Heart left ventricle (tissue), 16 donors: ENCODE measurements at regions of chr13 and their contacts with region 1.

Region 1: DNA sequence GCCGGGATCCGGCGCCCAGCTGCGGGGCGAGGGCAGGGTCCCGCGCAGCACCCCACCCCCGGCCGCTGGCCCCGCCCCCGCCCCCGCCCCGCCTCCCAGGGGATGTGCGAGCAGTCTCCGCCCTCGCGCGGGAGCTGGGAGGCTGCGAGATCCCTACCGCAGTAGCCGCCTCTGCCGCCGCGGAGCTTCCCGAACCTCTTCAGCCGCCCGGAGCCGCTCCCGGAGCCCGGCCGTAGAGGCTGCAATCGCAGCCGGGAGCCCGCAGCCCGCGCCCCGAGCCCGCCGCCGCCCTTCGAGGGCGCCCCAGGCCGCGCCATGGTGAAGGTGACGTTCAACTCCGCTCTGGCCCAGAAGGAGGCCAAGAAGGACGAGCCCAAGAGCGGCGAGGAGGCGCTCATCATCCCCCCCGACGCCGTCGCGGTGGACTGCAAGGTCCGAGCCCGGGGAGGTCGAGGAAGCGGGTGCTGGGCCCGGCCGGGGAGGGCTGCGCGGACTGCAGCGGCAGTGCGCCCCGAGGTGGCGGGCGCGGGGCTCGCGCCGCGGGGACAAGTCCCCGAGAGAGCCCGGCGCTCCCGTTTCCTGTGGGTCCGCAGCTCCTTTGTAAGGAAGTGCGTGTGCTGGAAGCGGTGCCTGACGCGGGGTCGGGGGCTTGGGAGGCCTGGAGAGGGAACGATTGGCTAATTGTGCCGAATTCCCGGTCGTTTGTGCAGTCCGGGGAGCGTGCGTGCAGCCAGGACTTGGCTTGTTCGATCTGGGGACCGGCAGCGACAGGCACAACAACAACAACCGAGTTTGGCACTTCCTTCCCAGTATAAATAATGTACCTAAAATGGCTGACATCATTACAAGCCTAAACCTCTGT is at the start of gene ITM2B:
- DNase-seq: peak; percentile 84 to 91 (median 87)
- ATAC-seq: peak; percentile 68 to 95 (median 88)
- H3K4me3 ChIP-seq: peak within 1 kb of the TSS; percentile 84 to 100 (median 96)
- H3K27ac ChIP-seq: peak within 1 kb of the TSS; percentile 99 to 100 (median 100)
- H3K4me1 ChIP-seq: peaks cover 6 to 59% (median 39%) of the 10 kb centered on the region in 12 donors
- H3K27me3 ChIP-seq: no peaks in the 10 kb centered on the region
- CTCF ChIP-seq: peak in 11 of 12 donors; percentile 28 to 64 (median 48)
- POLR2A ChIP-seq: peak; percentile 67 to 94
- total RNA-seq, gene ITM2B: 402 to 772 (median 504) TPM

Region 2: DNA sequence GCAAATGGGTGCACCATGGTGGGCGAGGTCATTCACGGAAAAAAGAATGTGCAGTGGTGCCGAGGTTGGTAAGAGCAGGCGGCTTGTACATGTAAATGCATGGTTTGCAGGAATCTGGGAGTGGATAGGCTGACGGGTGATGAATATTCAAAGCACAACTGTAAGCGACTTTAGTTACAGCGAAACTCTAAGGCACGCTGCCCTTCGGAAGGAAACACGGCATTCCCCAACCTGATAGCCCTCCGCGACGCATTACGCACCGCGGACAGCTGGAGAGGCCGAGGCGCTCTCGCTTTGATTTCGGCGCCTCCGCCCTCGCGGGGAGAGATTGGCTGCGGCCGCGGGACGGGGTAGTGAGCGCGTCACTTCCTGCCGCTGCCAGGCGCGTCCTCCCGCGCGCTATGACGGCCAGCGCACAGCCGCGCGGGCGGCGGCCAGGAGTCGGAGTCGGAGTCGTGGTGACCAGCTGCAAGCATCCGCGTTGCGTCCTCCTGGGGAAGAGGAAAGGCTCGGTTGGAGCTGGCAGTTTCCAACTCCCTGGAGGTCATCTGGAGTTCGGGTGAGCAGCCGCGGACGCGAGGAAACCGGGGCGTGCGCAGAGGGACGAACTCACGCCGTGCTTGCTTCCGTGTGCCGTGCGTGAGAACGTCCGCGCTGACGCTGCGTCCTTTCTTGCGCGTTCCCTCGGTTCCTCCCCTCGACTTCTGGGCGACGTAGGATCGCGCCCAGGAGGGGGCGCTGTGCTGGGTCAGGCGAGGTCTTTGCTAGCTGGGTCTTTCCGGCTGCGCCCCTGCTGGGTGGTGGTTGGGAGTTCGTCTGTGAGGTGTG is 195.7 kb before region 1 on chr13 and contains the start of gene NUDT15:
- intact Hi-C with region 1: loop called in 2 of 10 experiments (anchors 2 to 5 kb)
- DNase-seq: peak; percentile 93 to 96 (median 94)
- ATAC-seq: peak; percentile 97 to 99 (median 99)
- H3K4me3 ChIP-seq: peak within 1 kb of the TSS; percentile 43 to 85 (median 71)
- H3K27ac ChIP-seq: peak within 1 kb of the TSS; percentile 78 to 99 (median 96)
- H3K4me1 ChIP-seq: peaks cover 2 to 22% (median 12%) of the 10 kb centered on the region in 12 donors
- H3K27me3 ChIP-seq: no peaks in the 10 kb centered on the region
- CTCF ChIP-seq: peak; percentile 91 to 100 (median 96)
- POLR2A ChIP-seq: peak; percentile 7 to 79
- total RNA-seq, gene NUDT15: 6.8 to 12.6 (median 10.4) TPM

Region 3: GRCh38 chr13:48094781-48095502 is 138.3 kb before region 1 on chr13 and contains the start of gene MED4:
- intact Hi-C with region 1: loop called in 7 of 10 experiments (anchors 5 to 10 kb)
- DNase-seq: peak; percentile 95 to 98 (median 96)
- ATAC-seq: peak; percentile 94 to 99 (median 98)
- H3K4me3 ChIP-seq: peak within 1 kb of the TSS; percentile 65 to 99 (median 90)
- H3K27ac ChIP-seq: peak within 1 kb of the TSS; percentile 78 to 95 (median 88)
- H3K4me1 ChIP-seq: peaks cover 0 to 47% (median 34%) of the 10 kb centered on the region in 12 donors
- H3K27me3 ChIP-seq: no peaks in the 10 kb centered on the region
- CTCF ChIP-seq: peak; percentile 98 to 100 (median 99)
- POLR2A ChIP-seq: peak in 1 of 2 donors; percentile 77
- total RNA-seq, gene MED4: 24.9 to 50.3 (median 46.0) TPM

Region 4: DNA sequence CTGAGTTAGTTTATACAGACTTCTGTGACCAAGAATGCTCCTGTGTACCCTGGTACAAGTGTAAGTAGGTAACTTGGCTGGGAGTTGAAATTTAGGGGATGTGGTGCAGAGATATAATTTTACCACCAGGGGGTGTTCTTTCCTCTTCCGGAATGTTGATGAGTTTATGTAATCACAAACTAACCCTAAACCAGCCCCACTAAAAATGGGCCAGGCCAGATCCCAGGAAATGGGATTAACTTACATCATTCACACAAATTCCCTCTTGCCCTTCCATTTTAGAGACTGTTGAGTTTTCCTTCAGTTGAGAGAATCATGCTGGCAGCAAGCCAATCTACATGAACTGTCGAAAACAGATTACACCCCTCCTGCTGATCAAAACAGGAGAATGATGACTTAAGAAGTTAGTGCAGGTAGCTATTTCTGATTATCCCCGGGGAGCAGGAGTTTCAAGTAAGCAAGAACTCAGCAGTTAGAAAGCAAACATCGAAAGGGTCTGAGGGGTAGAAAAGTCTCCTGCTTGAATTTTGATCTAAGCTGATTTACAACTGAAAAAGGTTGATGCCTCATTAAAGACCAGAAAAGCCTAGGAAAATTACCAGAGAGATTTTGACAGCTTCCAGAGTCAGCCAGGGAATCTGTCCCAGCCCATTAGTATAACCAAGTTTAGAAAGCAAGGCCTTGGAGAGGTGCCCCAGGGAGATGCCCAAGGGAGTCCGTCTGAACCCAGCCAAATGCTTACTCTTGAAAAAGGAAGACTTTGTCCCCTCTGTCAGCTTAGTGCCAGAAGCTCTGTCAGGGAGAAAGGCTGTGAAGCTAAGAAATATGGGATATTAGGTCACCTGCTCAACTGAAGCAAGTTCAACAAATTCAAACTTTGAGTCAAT is 106.1 kb before region 1 on chr13:
- intact Hi-C with region 1: loop called (anchors 2 to 10 kb)
- DNase-seq: peak; percentile 53 to 78 (median 76)
- ATAC-seq: peak; percentile 56 to 82 (median 74)
- H3K4me3 ChIP-seq: peak overlapping the region in 1 of 12 donors; percentile 6
- H3K27ac ChIP-seq: peak overlapping the region; percentile 75 to 96 (median 90)
- H3K4me1 ChIP-seq: peaks cover 0 to 51% (median 40%) of the 10 kb centered on the region in 12 donors
- H3K27me3 ChIP-seq: no peaks in the 10 kb centered on the region
- CTCF ChIP-seq: peak; percentile 60 to 86 (median 75)
- POLR2A ChIP-seq: no peak

Region 5: DNA sequence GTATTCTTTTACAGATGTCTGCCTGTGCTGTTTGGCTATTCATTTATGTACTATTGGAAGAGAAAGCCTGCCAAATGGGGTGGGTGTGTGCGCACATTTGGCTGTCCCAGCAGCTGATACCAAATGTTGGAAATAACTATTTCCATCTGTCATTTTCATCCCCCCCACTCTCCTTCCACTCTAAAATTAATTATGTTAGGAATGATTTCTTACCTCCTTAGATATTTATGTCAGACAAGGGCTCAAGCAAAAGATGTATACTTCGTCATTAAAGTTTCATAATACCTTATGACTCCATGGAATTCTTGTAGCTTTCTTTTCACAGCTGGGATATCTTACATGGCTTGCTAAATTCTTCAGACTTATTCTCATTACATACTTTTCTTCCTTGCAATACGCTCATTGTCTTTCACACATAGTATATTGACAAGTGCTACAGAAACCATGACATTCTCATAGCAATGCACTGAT is 18.4 kb after region 1 on chr13:
- intact Hi-C with region 1: loop called in 1 of 10 experiments (anchors 2 kb)
- DNase-seq: peak in 1 of 5 donors; percentile 20
- ATAC-seq: peak in 2 of 4 donors; percentile 34 to 57
- H3K4me3 ChIP-seq: peak overlapping the region in 1 of 12 donors; percentile 0
- H3K27ac ChIP-seq: peak overlapping the region in 10 of 12 donors; percentile 6 to 69 (median 21)
- H3K4me1 ChIP-seq: peaks cover 6 to 96% (median 62%) of the 10 kb centered on the region in 12 donors
- H3K27me3 ChIP-seq: no peaks in the 10 kb centered on the region
- CTCF ChIP-seq: no peak
- POLR2A ChIP-seq: no peak

Region 6: GRCh38 chr13:48275507-48275906 is 42.2 kb after region 1 on chr13:
- intact Hi-C with region 1: no loop called
- DNase-seq: no peak
- ATAC-seq: no peak
- H3K4me3 ChIP-seq: no peak overlapping the region
- H3K27ac ChIP-seq: no peak overlapping the region
- H3K4me1 ChIP-seq: peaks cover 0 to 9% (median 0%) of the 10 kb centered on the region in 12 donors
- H3K27me3 ChIP-seq: no peaks in the 10 kb centered on the region
- CTCF ChIP-seq: no peak
- POLR2A ChIP-seq: no peak

Region 7: DNA sequence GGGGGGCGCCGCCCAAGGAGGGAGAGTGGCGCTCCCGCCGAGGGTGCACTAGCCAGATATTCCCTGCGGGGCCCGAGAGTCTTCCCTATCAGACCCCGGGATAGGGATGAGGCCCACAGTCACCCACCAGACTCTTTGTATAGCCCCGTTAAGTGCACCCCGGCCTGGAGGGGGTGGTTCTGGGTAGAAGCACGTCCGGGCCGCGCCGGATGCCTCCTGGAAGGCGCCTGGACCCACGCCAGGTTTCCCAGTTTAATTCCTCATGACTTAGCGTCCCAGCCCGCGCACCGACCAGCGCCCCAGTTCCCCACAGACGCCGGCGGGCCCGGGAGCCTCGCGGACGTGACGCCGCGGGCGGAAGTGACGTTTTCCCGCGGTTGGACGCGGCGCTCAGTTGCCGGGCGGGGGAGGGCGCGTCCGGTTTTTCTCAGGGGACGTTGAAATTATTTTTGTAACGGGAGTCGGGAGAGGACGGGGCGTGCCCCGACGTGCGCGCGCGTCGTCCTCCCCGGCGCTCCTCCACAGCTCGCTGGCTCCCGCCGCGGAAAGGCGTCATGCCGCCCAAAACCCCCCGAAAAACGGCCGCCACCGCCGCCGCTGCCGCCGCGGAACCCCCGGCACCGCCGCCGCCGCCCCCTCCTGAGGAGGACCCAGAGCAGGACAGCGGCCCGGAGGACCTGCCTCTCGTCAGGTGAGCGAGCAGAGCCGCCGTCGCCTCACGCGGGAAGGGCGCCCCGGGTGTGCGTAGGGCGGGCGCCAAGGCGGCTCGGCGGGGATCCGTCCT is 70.3 kb after region 1 on chr13 and contains the start of gene RB1:
- intact Hi-C with region 1: loop called in 7 of 10 experiments (anchors 1 to 5 kb)
- DNase-seq: peak; percentile 94 to 96 (median 96)
- ATAC-seq: peak; percentile 90 to 97 (median 96)
- H3K4me3 ChIP-seq: peak within 1 kb of the TSS; percentile 76 to 99 (median 94)
- H3K27ac ChIP-seq: peak within 1 kb of the TSS; percentile 97 to 100 (median 100)
- H3K4me1 ChIP-seq: peaks cover 0 to 37% (median 27%) of the 10 kb centered on the region in 12 donors
- H3K27me3 ChIP-seq: no peaks in the 10 kb centered on the region
- CTCF ChIP-seq: no peak
- POLR2A ChIP-seq: peak; percentile 78 to 96
- total RNA-seq, gene RB1: 22.4 to 52.1 (median 28.4) TPM

Region 8: DNA sequence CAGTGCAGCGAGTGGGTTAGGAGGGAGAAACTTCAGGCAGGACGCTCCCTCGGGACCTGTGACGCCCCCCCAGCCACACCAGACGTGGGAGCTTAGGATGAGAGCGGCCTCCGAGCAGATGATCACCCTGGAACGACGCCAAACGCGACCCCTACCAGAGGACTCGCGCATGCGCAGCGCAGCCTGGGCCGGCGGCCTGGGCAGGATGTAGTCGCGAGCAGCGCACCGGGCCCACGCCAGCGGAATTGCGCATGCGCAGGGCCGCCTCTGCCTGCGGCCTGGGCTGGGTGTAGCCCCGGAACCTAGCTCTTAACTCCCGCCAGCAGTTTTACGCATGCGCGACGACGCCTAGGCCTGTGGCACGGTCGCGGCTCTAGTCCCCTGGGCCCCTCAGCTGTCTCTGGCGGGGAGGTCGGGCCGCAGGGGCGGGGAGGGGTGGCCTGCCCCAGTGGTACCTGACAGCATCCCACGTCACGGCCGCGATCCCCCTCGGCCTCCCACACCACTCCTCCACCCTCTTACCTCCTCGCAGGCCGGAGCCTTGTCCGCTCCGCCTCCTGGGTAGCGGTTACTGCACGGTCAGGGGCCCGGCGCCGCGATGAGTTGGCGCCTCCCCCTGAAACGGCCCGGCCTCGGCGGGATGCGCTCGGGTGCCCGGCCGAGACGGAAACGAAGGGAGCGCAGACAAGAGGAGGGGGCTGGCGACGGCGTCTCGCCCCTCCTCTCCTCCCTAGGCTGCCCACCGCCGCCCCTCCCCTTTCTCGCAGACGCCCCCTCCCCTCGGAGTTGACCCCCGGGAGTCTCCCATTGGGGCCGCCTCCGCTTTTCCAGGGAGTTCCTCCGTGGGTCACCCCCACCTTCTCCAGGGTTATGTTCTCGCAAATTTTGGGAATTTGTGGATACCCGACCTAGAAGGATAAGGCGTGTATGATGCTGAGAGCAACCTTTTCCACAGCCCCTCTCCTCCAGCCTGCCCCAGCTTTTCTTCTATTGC is 299.5 kb after region 1 on chr13 and contains the start of gene RCBTB2:
- intact Hi-C with region 1: loop called in 1 of 10 experiments (anchors 5 kb)
- DNase-seq: peak; percentile 99 to 100 (median 99)
- ATAC-seq: peak; percentile 97 to 98 (median 97)
- H3K4me3 ChIP-seq: peak within 1 kb of the TSS; percentile 33 to 90 (median 72)
- H3K27ac ChIP-seq: peak within 1 kb of the TSS; percentile 95 to 99 (median 98)
- H3K4me1 ChIP-seq: peaks cover 0 to 73% (median 20%) of the 10 kb centered on the region in 12 donors
- H3K27me3 ChIP-seq: no peaks in the 10 kb centered on the region
- CTCF ChIP-seq: peak in 1 of 12 donors; percentile 10
- POLR2A ChIP-seq: peak in 1 of 2 donors; percentile 87
- total RNA-seq, gene RCBTB2: 5.9 to 16.2 (median 11.8) TPM